ENCODE measurements at regions of chr11 and their contacts with region 1.

Region 1: DNA sequence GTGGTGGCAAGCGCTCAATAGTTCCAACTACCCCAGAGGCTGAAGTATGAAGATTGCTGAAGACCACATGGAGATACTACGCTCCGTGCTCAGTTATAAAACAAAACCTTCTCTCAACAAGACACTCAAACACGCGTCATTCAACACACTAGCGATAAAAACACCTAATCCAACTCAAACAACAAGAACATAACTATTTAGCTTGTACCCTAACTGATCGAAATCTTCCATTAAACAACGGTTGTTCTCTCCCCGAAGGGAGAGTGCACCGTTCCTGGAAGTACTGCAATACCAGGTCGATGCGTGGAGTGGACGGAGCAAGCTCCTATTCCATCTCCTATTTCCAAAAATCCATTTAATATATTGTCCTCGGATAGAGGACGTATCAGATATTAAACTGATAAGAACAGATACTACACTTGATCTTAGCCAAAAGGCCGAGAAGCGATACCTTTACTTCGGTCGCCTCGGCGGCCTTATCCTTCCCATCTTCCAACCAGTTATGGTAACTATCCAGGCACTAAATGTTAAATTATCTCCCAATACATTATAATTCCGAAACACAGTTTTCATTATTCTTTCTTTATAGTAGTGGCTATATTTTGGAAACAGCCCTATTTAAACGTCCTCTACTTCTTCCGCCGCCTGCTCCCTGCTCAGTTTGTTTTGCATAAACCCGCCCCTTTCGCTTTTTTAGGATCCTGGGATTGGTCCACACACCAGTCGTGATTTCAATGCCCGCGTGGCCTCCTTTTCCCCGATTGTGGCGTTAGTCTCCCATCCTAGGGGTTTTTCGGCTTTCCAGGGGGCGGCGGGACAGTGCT is 2.2 kb upstream of the WDR74 start:
- DNase-seq: peak; percentile 88
- ATAC-seq: peak; percentile 70
- H3K4me3 Mint-ChIP-seq: no peak overlapping the region
- H3K27ac Mint-ChIP-seq: no peak overlapping the region
- H3K4me1 Mint-ChIP-seq: peaks cover 22% of the 10 kb centered on the region
- H3K27me3 Mint-ChIP-seq: no peaks in the 10 kb centered on the region
- CTCF ChIP-seq: no peak

Region 2: DNA sequence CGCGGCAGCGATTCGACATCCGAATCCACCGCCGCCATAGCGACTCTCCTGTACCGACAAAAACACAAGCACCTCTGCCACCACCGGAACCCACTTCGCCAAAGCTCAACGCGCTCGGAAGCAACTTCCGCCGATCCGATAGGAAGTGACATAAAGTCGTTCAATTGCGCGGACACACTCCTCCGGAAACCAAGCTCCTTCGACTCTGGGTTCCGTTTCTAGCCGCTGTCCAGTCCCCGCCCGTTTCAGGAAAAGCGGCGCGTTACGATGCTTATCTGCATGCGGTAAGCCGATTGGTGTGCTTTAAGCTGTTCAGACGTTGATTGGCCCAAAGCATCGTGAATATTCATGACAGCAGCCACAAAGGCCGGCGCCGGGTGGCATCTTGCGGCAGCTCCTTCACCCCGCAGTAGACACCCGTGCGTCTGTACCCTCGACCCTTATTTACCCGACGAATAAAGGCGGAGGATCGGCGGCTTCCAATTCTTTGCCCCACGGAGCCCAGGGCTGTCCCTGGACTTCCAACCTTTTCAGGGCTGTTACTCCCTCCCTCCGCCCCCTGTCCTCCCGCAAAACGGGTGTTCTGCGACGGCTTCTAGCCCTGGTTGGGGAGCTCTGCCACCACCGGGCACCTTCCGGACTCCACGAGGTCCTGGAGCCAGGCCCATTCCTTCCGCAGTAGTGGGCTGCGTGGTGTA is 250.0 kb before region 1 on chr11 and contains the start of gene TUT1:
- CTCF ChIA-PET with region 1: interaction called, 3 read pairs
- POLR2A ChIA-PET with region 1: interaction called, 9 read pairs
- intact Hi-C with region 1: loop called (anchors 10 kb)
- DNase-seq: peak; percentile 98
- ATAC-seq: peak; percentile 91
- H3K4me3 Mint-ChIP-seq: peak within 1 kb of the TSS; percentile 100
- H3K27ac Mint-ChIP-seq: peak within 1 kb of the TSS; percentile 98
- H3K4me1 Mint-ChIP-seq: peaks cover 49% of the 10 kb centered on the region
- H3K27me3 Mint-ChIP-seq: no peaks in the 10 kb centered on the region
- CTCF ChIP-seq: no peak
- total RNA-seq, gene TUT1: 34.4 to 38.0 TPM

Region 3: DNA sequence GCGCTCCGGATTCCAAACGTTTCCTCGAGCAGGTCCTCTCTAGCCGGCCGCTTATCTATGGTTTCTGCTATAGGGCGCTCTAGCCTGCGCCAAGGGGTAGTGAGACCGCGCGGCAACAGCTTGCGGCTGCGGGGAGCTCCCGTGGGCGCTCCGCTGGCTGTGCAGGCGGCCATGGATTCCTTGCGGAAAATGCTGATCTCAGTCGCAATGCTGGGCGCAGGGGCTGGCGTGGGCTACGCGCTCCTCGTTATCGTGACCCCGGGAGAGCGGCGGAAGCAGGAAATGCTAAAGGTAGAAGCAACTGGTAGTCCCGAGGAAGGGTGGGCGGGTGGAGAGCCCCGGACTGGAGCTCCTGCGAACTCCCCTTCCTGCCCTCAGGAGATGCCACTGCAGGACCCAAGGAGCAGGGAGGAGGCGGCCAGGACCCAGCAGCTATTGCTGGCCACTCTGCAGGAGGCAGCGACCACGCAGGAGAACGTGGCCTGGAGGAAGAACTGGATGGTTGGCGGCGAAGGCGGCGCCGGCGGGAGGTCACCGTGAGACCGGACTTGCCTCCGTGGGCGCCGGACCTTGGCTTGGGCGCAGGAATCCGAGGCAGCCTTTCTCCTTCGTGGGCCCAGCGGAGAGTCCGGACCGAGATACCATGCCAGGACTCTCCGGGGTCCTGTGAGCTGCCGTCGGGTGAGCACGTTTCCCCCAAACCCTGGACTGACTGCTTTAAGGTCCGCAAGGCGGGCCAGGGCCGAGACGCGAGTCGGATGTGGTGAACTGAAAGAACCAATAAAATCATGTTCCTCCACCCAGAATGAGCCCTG is 169.8 kb before region 1 on chr11 and contains the starts of genes LBHD1 and UQCC3:
- CTCF ChIA-PET with region 1: no interaction called
- POLR2A ChIA-PET with region 1: interaction called, 23 read pairs
- intact Hi-C with region 1: no loop called
- DNase-seq: peak; percentile 96
- ATAC-seq: peak; percentile 91
- H3K4me3 Mint-ChIP-seq: peak within 1 kb of the TSS; percentile 91
- H3K27ac Mint-ChIP-seq: peak within 1 kb of the TSS; percentile 98
- H3K4me1 Mint-ChIP-seq: peaks cover 41% of the 10 kb centered on the region
- H3K27me3 Mint-ChIP-seq: no peaks in the 10 kb centered on the region
- CTCF ChIP-seq: no peak
- total RNA-seq, gene LBHD1: 12.0 to 12.9 TPM
- total RNA-seq, gene UQCC3: 4.7 TPM

Region 4: DNA sequence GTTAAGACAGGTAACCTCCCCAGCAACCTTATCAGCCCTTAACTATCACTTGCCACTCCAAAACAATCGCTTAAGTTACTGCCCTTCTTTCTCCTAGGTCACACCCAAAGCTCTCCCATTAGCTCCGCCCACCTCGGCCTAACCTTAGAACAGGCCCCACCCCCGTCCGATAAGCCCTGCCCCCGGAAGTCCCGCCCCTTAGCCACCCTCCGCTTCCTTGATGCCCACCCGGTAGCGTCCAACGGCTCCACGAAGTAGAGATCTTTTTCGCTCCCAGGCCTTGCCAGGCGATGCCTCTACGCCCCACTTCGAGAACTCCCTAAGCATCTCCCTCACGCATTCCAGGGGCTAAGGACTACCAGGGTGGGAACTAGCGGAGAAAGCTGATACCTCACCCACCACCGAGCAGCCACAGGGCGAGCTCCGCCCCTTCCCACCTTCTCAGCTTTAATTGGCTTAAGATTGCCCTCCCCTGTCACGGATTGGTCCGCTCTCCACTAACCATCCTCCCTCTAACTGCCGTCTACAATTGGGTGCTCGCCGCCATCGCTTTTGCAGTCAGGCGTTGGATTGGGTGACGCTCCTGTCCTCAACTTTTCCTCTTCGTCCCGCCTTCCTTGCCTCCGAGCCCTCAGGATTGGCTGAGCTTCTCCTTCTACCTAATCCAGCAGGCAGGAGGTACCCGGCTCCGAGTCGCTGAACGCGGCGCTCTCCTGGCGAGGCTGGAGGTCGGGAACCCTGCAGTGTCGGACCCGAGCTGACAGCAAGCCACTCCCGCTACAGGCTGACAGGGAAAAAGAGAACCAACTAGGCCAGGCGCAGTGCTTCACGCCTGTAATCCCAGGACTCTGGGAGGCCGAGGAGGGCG is 87.6 kb before region 1 on chr11 and contains the start of gene ZBTB3:
- CTCF ChIA-PET with region 1: interaction called, 3 read pairs
- POLR2A ChIA-PET with region 1: interaction called, 10 read pairs
- intact Hi-C with region 1: no loop called
- DNase-seq: peak; percentile 99
- ATAC-seq: peak; percentile 97
- H3K4me3 Mint-ChIP-seq: peak within 1 kb of the TSS; percentile 99
- H3K27ac Mint-ChIP-seq: peak within 1 kb of the TSS; percentile 99
- H3K4me1 Mint-ChIP-seq: peaks cover 26% of the 10 kb centered on the region
- H3K27me3 Mint-ChIP-seq: no peaks in the 10 kb centered on the region
- CTCF ChIP-seq: no peak
- total RNA-seq, gene ZBTB3: 9.8 to 11.8 TPM

Region 5: DNA sequence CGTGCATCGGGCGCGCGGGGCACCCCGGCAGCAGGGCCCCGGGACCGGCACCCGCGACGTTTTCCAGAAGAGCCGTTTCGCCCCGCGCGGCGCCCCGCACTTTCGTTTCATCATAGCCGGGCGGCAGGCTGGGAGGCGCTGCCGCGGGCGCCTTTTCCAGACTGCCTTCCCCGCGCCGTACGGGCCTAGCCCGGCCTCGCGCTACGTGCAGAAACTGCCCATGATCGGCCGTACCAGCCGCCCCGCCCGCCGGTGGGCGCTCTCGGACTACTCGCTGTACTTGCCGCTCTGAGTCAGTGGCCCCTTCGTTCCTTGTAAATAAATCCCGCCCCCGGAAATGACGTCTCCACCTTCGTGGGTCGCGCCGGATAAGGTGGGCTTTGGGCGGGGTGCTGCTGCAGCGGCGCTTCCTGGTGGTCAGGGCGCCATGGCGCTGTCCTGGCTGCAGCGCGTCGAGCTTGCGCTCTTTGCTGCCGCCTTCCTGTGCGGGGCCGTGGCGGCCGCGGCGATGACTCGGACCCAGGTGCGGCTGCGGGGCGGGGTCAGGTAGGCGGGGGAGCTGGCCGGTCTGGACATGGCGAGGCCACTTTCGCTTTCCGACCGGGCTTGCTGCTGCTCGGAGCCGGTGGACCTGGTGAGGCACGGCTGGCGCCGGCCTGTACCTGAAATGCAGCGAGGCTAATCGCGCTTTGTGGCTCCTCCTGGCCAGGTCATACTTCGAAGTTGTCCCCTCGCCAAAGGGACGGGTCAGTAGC is 54.4 kb before region 1 on chr11 and contains the start of gene TMEM179B:
- CTCF ChIA-PET with region 1: interaction called, 33 read pairs
- POLR2A ChIA-PET with region 1: interaction called, 116 read pairs
- intact Hi-C with region 1: no loop called
- DNase-seq: peak; percentile 100
- ATAC-seq: peak; percentile 75
- H3K4me3 Mint-ChIP-seq: peak within 1 kb of the TSS; percentile 95
- H3K27ac Mint-ChIP-seq: peak within 1 kb of the TSS; percentile 95
- H3K4me1 Mint-ChIP-seq: peaks cover 41% of the 10 kb centered on the region
- H3K27me3 Mint-ChIP-seq: no peaks in the 10 kb centered on the region
- CTCF ChIP-seq: peak; percentile 69
- total RNA-seq, gene TMEM179B: 18.6 to 19.5 TPM

Region 6: GRCh38 chr11:62855571-62856332 is 14.2 kb after region 1 on chr11:
- CTCF ChIA-PET with region 1: interaction called, 4 read pairs
- POLR2A ChIA-PET with region 1: interaction called, 997 read pairs
- intact Hi-C with region 1: loop called (anchors 1 kb)
- DNase-seq: peak; percentile 98
- ATAC-seq: peak; percentile 89
- H3K4me3 Mint-ChIP-seq: peak overlapping the region; percentile 95
- H3K27ac Mint-ChIP-seq: peak overlapping the region; percentile 95
- H3K4me1 Mint-ChIP-seq: peaks cover 46% of the 10 kb centered on the region
- H3K27me3 Mint-ChIP-seq: no peaks in the 10 kb centered on the region
- CTCF ChIP-seq: no peak

Region 7: GRCh38 chr11:62931499-62932278 is 90.1 kb after region 1 on chr11:
- CTCF ChIA-PET with region 1: no interaction called
- POLR2A ChIA-PET with region 1: no interaction called
- intact Hi-C with region 1: no loop called
- DNase-seq: no peak
- ATAC-seq: no peak
- H3K4me3 Mint-ChIP-seq: no peak overlapping the region
- H3K27ac Mint-ChIP-seq: no peak overlapping the region
- H3K4me1 Mint-ChIP-seq: no peaks in the 10 kb centered on the region
- H3K27me3 Mint-ChIP-seq: peaks cover 34% of the 10 kb centered on the region
- CTCF ChIP-seq: no peak

Region 8: GRCh38 chr11:63179432-63180041 is 338.0 kb after region 1 on chr11:
- CTCF ChIA-PET with region 1: no interaction called
- POLR2A ChIA-PET with region 1: no interaction called
- intact Hi-C with region 1: no loop called
- DNase-seq: no peak
- ATAC-seq: no peak
- H3K4me3 Mint-ChIP-seq: no peak overlapping the region
- H3K27ac Mint-ChIP-seq: no peak overlapping the region
- H3K4me1 Mint-ChIP-seq: no peaks in the 10 kb centered on the region
- H3K27me3 Mint-ChIP-seq: peaks cover 13% of the 10 kb centered on the region
- CTCF ChIP-seq: no peak

Measured in activated CD8-positive, alpha-beta T cell treated with anti-CD3 and anti-CD28 coated beads for 36 hours (primary cell).